ENCODE measurements at regions of chr15 and their contacts with region 1.

Region 1: DNA sequence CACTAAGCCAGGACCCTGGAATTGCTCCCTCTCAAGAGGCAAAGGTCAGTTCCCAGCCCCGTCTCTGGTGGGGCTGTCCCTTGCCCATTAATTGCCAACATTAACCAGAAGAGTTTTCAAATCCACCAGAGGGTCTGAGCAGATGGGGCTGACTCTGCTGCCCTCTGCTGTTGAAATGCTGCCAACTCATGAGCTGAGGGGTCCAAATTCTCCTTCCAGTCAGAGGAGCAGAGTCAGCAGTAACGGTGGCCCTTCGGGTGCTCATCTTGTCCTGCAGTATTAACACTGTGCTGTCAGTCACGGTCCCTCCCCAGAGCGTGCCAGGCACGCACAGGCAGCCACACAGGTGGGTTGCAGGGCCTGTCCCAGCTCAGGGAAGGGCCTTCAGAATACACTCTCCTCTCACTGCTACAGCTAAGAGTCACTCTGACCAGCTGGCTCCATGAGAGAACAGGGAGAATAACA is 10.7 kb upstream of the SPTBN5 start:
- DNase-seq: peak; percentile 63 to 85 (median 71)
- ATAC-seq: peak; percentile 88
- H3K4me3 ChIP-seq: no peak overlapping the region
- H3K4me3 Mint-ChIP-seq: no peak overlapping the region
- H3K27ac ChIP-seq: no peak overlapping the region
- H3K27ac Mint-ChIP-seq: peak overlapping the region; percentile 80
- H3K4me1 ChIP-seq: peaks cover 10% of the 10 kb centered on the region
- H3K4me1 Mint-ChIP-seq: peaks cover 7% of the 10 kb centered on the region
- H3K27me3 ChIP-seq: no peaks in the 10 kb centered on the region
- H3K27me3 Mint-ChIP-seq: no peaks in the 10 kb centered on the region
- CTCF ChIP-seq: peak; percentile 95

Region 2: DNA sequence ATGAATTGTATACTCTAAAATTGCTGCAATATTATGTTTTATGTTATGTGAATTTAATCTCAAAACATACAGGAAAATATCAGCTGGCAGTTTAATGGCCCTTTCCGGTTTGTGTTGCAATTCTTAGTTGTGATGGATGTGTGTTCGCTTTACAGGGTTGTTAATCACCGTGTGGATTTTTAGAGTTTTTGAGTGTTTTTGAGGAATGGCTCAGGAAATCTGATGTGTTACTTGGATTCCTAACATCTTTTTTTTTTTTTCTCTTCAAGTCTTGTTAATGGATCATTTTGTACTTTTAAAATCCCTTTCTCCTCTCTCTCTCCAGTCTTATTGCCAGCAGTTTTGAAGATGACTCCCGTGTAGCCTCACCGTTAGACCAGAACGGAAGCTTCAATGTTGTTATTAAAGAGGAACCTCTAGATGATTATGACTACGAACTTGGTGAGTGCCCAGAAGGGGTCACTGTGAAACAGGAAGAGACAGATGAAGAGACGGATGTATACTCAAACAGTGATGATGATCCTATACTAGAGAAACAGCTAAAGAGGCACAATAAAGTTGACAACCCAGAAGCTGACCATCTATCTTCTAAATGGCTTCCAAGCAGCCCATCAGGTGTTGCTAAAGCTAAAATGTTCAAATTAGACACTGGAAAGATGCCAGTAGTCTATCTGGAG is 208.7 kb before region 1 on chr15:
- CTCF ChIA-PET with region 1: no interaction called
- POLR2A ChIA-PET with region 1: no interaction called
- intact Hi-C with region 1: loop called in 1 of 2 experiments (anchors 5 kb)
- DNase-seq: peak in 12 of 14 experiments; percentile 7 to 78 (median 32)
- ATAC-seq: peak; percentile 96
- H3K4me3 ChIP-seq: no peak overlapping the region
- H3K4me3 Mint-ChIP-seq: peak overlapping the region; percentile 8
- H3K27ac ChIP-seq: no peak overlapping the region
- H3K27ac Mint-ChIP-seq: peak overlapping the region; percentile 54
- H3K4me1 ChIP-seq: peaks cover 7% of the 10 kb centered on the region
- H3K4me1 Mint-ChIP-seq: peaks cover 51% of the 10 kb centered on the region
- H3K27me3 ChIP-seq: no peaks in the 10 kb centered on the region
- H3K27me3 Mint-ChIP-seq: no peaks in the 10 kb centered on the region
- CTCF ChIP-seq: peak; percentile 63

Region 3: GRCh38 chr15:41811432-41812195 is 93.0 kb before region 1 on chr15:
- CTCF ChIA-PET with region 1: interaction called, 16 read pairs
- POLR2A ChIA-PET with region 1: no interaction called
- intact Hi-C with region 1: loop called in 1 of 2 experiments (anchors 5 kb)
- DNase-seq: peak; percentile 62 to 88 (median 70)
- ATAC-seq: peak; percentile 97
- H3K4me3 ChIP-seq: no peak overlapping the region
- H3K4me3 Mint-ChIP-seq: no peak overlapping the region
- H3K27ac ChIP-seq: no peak overlapping the region
- H3K27ac Mint-ChIP-seq: peak overlapping the region; percentile 43
- H3K4me1 ChIP-seq: peaks cover 19% of the 10 kb centered on the region
- H3K4me1 Mint-ChIP-seq: peaks cover 12% of the 10 kb centered on the region
- H3K27me3 ChIP-seq: no peaks in the 10 kb centered on the region
- H3K27me3 Mint-ChIP-seq: no peaks in the 10 kb centered on the region
- CTCF ChIP-seq: peak; percentile 92

Region 4: GRCh38 chr15:41827880-41828806 is 76.4 kb before region 1 on chr15 and contains the start of gene JMJD7:
- CTCF ChIA-PET with region 1: interaction called, 4 read pairs
- POLR2A ChIA-PET with region 1: interaction called, 6 read pairs
- intact Hi-C with region 1: loop called (anchors 1 to 2 kb)
- DNase-seq: peak; percentile 92 to 99 (median 96)
- ATAC-seq: peak; percentile 94
- H3K4me3 ChIP-seq: peak within 1 kb of the TSS; percentile 92
- H3K4me3 Mint-ChIP-seq: peak within 1 kb of the TSS; percentile 90
- H3K27ac ChIP-seq: peak within 1 kb of the TSS; percentile 53 to 64
- H3K27ac Mint-ChIP-seq: peak within 1 kb of the TSS; percentile 87
- H3K4me1 ChIP-seq: peaks cover 52% of the 10 kb centered on the region
- H3K4me1 Mint-ChIP-seq: peaks cover 30% of the 10 kb centered on the region
- H3K27me3 ChIP-seq: no peaks in the 10 kb centered on the region
- H3K27me3 Mint-ChIP-seq: no peaks in the 10 kb centered on the region
- CTCF ChIP-seq: no peak
- total RNA-seq, gene JMJD7: 35.6 to 38.4 TPM